Gastrocnemius medialis (tissue), 4 donors: ENCODE measurements at regions of chr20 and their contacts with region 1.

Region 1: GRCh38 chr20:63830841-63831588 is at the start of gene ZBTB46:
- DNase-seq: no peak
- ATAC-seq: peak; percentile 74 to 82
- H3K4me3 ChIP-seq: peak within 1 kb of the TSS; percentile 55 to 71 (median 58)
- H3K27ac ChIP-seq: peak within 1 kb of the TSS; percentile 43 to 78 (median 66)
- H3K4me1 ChIP-seq: peaks cover 3 to 19% of the 10 kb centered on the region in 2 donors
- H3K27me3 ChIP-seq: peaks cover 0 to 6% (median 0%) of the 10 kb centered on the region in 3 donors
- CTCF ChIP-seq: no peak
- POLR2A ChIP-seq: no peak
- total RNA-seq, gene ZBTB46: 4.3 to 7.1 (median 5.6) TPM

Region 2: GRCh38 chr20:63782051-63782471 is 49.0 kb before region 1 on chr20:
- in situ Hi-C with region 1: no loop called
- intact Hi-C with region 1: no loop called
- DNase-seq: no peak
- ATAC-seq: no peak
- H3K4me3 ChIP-seq: no peak overlapping the region
- H3K27ac ChIP-seq: no peak overlapping the region
- H3K4me1 ChIP-seq: peaks cover 0 to under 1% of the 10 kb centered on the region in 2 donors
- H3K27me3 ChIP-seq: no peaks in the 10 kb centered on the region
- CTCF ChIP-seq: no peak
- POLR2A ChIP-seq: no peak

Region 3: GRCh38 chr20:63850689-63851559 is 19.9 kb after region 1 on chr20:
- in situ Hi-C with region 1: no loop called
- intact Hi-C with region 1: no loop called
- DNase-seq: no peak
- ATAC-seq: no peak
- H3K4me3 ChIP-seq: no peak overlapping the region
- H3K27ac ChIP-seq: no peak overlapping the region
- H3K4me1 ChIP-seq: peaks cover 45 to 49% of the 10 kb centered on the region in 2 donors
- H3K27me3 ChIP-seq: peaks cover 6 to 27% (median 24%) of the 10 kb centered on the region in 3 donors
- CTCF ChIP-seq: no peak
- POLR2A ChIP-seq: no peak

Region 4: GRCh38 chr20:63894358-63895201 is 63.6 kb after region 1 on chr20 and contains the start of gene DNAJC5:
- in situ Hi-C with region 1: no loop called
- intact Hi-C with region 1: loop called (anchors 2 kb)
- DNase-seq: peak; percentile 91 to 94
- ATAC-seq: peak; percentile 90 to 92
- H3K4me3 ChIP-seq: peak within 1 kb of the TSS; percentile 63 to 66 (median 65)
- H3K27ac ChIP-seq: peak within 1 kb of the TSS; percentile 58 to 86 (median 78)
- H3K4me1 ChIP-seq: peaks cover 21 to 23% of the 10 kb centered on the region in 2 donors
- H3K27me3 ChIP-seq: no peaks in the 10 kb centered on the region
- CTCF ChIP-seq: no peak
- POLR2A ChIP-seq: peak; percentile 76 to 82
- total RNA-seq, gene DNAJC5: 18.5 to 26.4 (median 22.5) TPM